MCF 10A (cell line): ENCODE measurements at regions of chr19 and their contacts with region 1.

Region 1: DNA sequence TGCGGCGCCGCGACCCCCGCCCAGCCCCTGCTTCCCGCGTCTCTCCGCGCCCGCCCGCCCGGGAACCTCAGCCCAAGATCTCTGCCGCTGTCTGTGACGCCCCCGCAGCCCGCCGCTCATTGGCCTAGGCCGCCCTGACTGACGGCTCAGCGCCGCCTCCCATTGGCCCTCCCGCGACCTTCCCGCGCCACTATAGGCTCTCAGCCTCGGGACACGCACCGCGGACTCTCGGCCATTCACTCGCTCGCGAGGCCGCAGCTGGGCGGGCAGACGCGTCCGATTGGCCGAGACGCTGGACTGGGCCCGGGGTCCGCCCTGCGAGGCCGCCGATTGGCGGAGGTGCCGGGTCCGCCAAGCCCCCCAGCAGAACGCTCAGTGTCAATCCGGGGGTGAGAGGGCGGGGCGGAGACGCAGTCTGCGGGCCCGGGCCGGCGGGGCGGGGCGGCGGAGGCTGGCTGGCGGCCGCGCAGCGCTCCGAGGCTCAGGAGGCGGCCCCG is at the start of gene PRKACA:
- DNase-seq: peak; percentile 99
- H3K4me3 Mint-ChIP-seq: peak within 1 kb of the TSS; percentile 83
- H3K27ac Mint-ChIP-seq: peak within 1 kb of the TSS; percentile 93
- H3K4me1 Mint-ChIP-seq: peaks cover 18% of the 10 kb centered on the region
- H3K27me3 Mint-ChIP-seq: no peaks in the 10 kb centered on the region
- CTCF ChIP-seq: no peak
- total RNA-seq, gene PRKACA: 44.7 and 49.8 TPM in 2 replicates

Region 2: GRCh38 chr19:14096272-14096992 is 21.3 kb before region 1 on chr19:
- CTCF ChIA-PET with region 1: interaction called, 11 read pairs
- POLR2A ChIA-PET with region 1: interaction called, 5 read pairs
- intact Hi-C with region 1: no loop called
- DNase-seq: no peak
- H3K4me3 Mint-ChIP-seq: no peak overlapping the region
- H3K27ac Mint-ChIP-seq: no peak overlapping the region
- H3K4me1 Mint-ChIP-seq: peaks cover 6% of the 10 kb centered on the region
- H3K27me3 Mint-ChIP-seq: no peaks in the 10 kb centered on the region
- CTCF ChIP-seq: peak; percentile 8

Region 3: GRCh38 chr19:14354445-14354844 is 236.7 kb after region 1 on chr19:
- CTCF ChIA-PET with region 1: no interaction called
- POLR2A ChIA-PET with region 1: no interaction called
- intact Hi-C with region 1: no loop called
- DNase-seq: no peak
- H3K4me3 Mint-ChIP-seq: no peak overlapping the region
- H3K27ac Mint-ChIP-seq: no peak overlapping the region
- H3K4me1 Mint-ChIP-seq: peaks cover 11% of the 10 kb centered on the region
- H3K27me3 Mint-ChIP-seq: no peaks in the 10 kb centered on the region
- CTCF ChIP-seq: no peak